Endothelial cell of umbilical vein (primary cell): ENCODE measurements at regions of chr12 and their contacts with region 1.

Region 1: GRCh38 chr12:12704593-12705230 is 8.7 kb upstream of the GPR19 start:
- DNase-seq: peak; percentile 86
- H3K4me3 ChIP-seq: no peak overlapping the region
- H3K27ac ChIP-seq: no peak overlapping the region
- H3K4me1 ChIP-seq: no peaks in the 10 kb centered on the region
- H3K27me3 ChIP-seq: no peaks in the 10 kb centered on the region
- CTCF ChIP-seq: peak; percentile 80 to 93
- POLR2A ChIP-seq: no peak

Region 2: GRCh38 chr12:11581179-11581755 is 1123.4 kb before region 1 on chr12:
- CTCF ChIA-PET with region 1: no interaction called
- POLR2A ChIA-PET with region 1: no interaction called
- dilution Hi-C with region 1: no loop called
- intact Hi-C with region 1: loop called (anchors 1 kb)
- DNase-seq: peak; percentile 65
- H3K4me3 ChIP-seq: no peak overlapping the region
- H3K27ac ChIP-seq: no peak overlapping the region
- H3K4me1 ChIP-seq: peaks cover 8% of the 10 kb centered on the region
- H3K27me3 ChIP-seq: no peaks in the 10 kb centered on the region
- CTCF ChIP-seq: peak in 1 of 2 donors; percentile 16
- POLR2A ChIP-seq: no peak

Region 3: GRCh38 chr12:12081836-12082497 is 622.7 kb before region 1 on chr12:
- CTCF ChIA-PET with region 1: no interaction called
- POLR2A ChIA-PET with region 1: no interaction called
- dilution Hi-C with region 1: no loop called
- intact Hi-C with region 1: loop called (anchors 1 kb)
- DNase-seq: peak; percentile 79
- H3K4me3 ChIP-seq: no peak overlapping the region
- H3K27ac ChIP-seq: peak overlapping the region; percentile 40
- H3K4me1 ChIP-seq: peaks cover 5% of the 10 kb centered on the region
- H3K27me3 ChIP-seq: no peaks in the 10 kb centered on the region
- CTCF ChIP-seq: peak; percentile 17 to 29
- POLR2A ChIP-seq: no peak

Region 4: GRCh38 chr12:12645485-12645884 is 59.2 kb before region 1 on chr12:
- CTCF ChIA-PET with region 1: interaction called, 5 read pairs
- POLR2A ChIA-PET with region 1: no interaction called
- dilution Hi-C with region 1: no loop called
- intact Hi-C with region 1: loop called (anchors 1 kb)
- DNase-seq: peak; percentile 6
- H3K4me3 ChIP-seq: no peak overlapping the region
- H3K27ac ChIP-seq: no peak overlapping the region
- H3K4me1 ChIP-seq: no peaks in the 10 kb centered on the region
- H3K27me3 ChIP-seq: no peaks in the 10 kb centered on the region
- CTCF ChIP-seq: peak; percentile 32 to 46
- POLR2A ChIP-seq: no peak

Region 5: DNA sequence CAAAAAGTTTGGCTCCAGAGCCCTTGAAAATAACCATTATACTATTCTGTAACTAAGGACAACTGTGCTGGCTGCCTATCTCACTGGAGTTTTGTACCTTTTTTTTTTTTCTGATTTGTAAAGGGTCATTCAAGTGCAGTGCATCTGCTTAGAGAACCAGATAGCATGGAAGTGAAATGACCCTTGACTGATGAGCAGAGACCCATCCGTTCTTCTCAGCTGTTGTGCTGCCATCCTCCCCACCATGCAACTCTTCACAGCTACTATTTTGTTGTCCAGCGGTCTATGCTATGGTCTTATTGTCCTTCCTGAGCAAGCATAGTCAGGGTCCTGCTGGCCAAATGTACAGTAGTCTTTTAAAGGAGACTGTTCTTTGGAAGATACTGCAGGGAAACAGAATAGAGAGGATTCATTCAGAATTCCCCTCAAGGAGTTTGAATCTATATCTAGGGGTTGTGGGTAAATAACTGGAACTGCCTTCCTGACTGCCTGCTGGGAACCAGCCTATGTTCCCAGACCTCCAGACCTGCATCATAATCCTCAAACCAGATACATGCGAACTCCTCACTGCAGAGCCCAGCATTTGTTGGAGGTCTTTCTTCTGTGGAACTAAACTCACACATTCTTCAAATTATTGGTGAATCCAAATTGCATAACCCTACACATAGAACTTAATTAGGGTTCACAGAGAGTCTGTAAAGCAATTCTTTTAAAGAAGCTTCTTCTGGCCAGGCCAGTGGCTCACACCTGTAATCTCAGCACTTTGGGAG is 49.8 kb before region 1 on chr12:
- CTCF ChIA-PET with region 1: interaction called, 3 read pairs
- POLR2A ChIA-PET with region 1: no interaction called
- dilution Hi-C with region 1: no loop called
- intact Hi-C with region 1: loop called (anchors 5 kb)
- DNase-seq: no peak
- H3K4me3 ChIP-seq: no peak overlapping the region
- H3K27ac ChIP-seq: no peak overlapping the region
- H3K4me1 ChIP-seq: no peaks in the 10 kb centered on the region
- H3K27me3 ChIP-seq: peaks cover 4 to 5% of the 10 kb centered on the region in 2 experiments
- CTCF ChIP-seq: no peak
- POLR2A ChIP-seq: no peak